ENCODE measurements at regions of chr6 and their contacts with region 1.

Region 1: GRCh38 chr6:12637960-12638641 is 78.5 kb upstream of the PHACTR1 start:
- DNase-seq: peak; percentile 73

Region 2: GRCh38 chr6:11595903-11596302 is 1042.2 kb before region 1 on chr6:
- in situ Hi-C with region 1: no loop called
- DNase-seq: no peak

Region 3: GRCh38 chr6:12440981-12441380 is 197.1 kb before region 1 on chr6:
- in situ Hi-C with region 1: no loop called
- DNase-seq: peak; percentile 6

Region 4: GRCh38 chr6:12890171-12890790 is 252.2 kb after region 1 on chr6:
- in situ Hi-C with region 1: loop called (anchors 25 kb)
- DNase-seq: peak; percentile 14

Measured in KBM-7 (cell line).